ENCODE measurements at regions of chr5 and their contacts with region 1.

Region 1: GRCh38 chr5:75351139-75351926 is 14.3 kb downstream of the HMGCR start:
- DNase-seq: no peak
- H3K4me3 Mint-ChIP-seq: peak overlapping the region; percentile 30
- H3K27ac Mint-ChIP-seq: peak overlapping the region; percentile 80
- H3K4me1 Mint-ChIP-seq: peaks cover 42% of the 10 kb centered on the region
- H3K27me3 Mint-ChIP-seq: no peaks in the 10 kb centered on the region

Region 2: GRCh38 chr5:75320341-75320740 is 31.0 kb before region 1 on chr5:
- intact Hi-C with region 1: loop called (anchors 1 kb)
- DNase-seq: no peak
- H3K4me3 Mint-ChIP-seq: no peak overlapping the region
- H3K27ac Mint-ChIP-seq: peak overlapping the region; percentile 77
- H3K4me1 Mint-ChIP-seq: peaks cover 24% of the 10 kb centered on the region
- H3K27me3 Mint-ChIP-seq: no peaks in the 10 kb centered on the region

Region 3: GRCh38 chr5:75511435-75512384 is 160.4 kb after region 1 on chr5 and contains the starts of genes CERT1 and POLK:
- intact Hi-C with region 1: loop called (anchors 1 kb)
- DNase-seq: peak; percentile 95
- H3K4me3 Mint-ChIP-seq: peak within 1 kb of the TSS; percentile 100
- H3K27ac Mint-ChIP-seq: peak within 1 kb of the TSS; percentile 90
- H3K4me1 Mint-ChIP-seq: peaks cover 51% of the 10 kb centered on the region
- H3K27me3 Mint-ChIP-seq: no peaks in the 10 kb centered on the region
- total RNA-seq, gene CERT1: 38.6 and 43.7 TPM in 2 replicates
- total RNA-seq, gene POLK: 41.4 and 42.6 TPM in 2 replicates

Measured in activated T-helper 2 cell treated with anti-CD3 and anti-CD28 coated beads, Interferon-gamma antibody, Interleukin-2, Interleukin-4, amounts not matched to agents 10 μg/mL and 5 μg/mL and 100 μg/mL, durations not matched to agents 14 hours and 24 hours and 36 hours (primary cell).